HEK293T (cell line): ENCODE measurements at regions of chr12 and their contacts with region 1.

Region 1: GRCh38 chr12:57111031-57111734 is at the start of gene STAT6:
- DNase-seq: peak; percentile 37

Region 2: GRCh38 chr12:57001448-57001906 is 109.7 kb before region 1 on chr12:
- CTCF ChIA-PET with region 1: interaction called, 17 read pairs
- POLR2A ChIA-PET with region 1: interaction called, 4 read pairs
- DNase-seq: peak; percentile 81

Region 3: GRCh38 chr12:57063991-57064685 is 47.0 kb before region 1 on chr12:
- CTCF ChIA-PET with region 1: interaction called, 48 read pairs
- POLR2A ChIA-PET with region 1: interaction called, 46 read pairs
- DNase-seq: no peak

Region 4: DNA sequence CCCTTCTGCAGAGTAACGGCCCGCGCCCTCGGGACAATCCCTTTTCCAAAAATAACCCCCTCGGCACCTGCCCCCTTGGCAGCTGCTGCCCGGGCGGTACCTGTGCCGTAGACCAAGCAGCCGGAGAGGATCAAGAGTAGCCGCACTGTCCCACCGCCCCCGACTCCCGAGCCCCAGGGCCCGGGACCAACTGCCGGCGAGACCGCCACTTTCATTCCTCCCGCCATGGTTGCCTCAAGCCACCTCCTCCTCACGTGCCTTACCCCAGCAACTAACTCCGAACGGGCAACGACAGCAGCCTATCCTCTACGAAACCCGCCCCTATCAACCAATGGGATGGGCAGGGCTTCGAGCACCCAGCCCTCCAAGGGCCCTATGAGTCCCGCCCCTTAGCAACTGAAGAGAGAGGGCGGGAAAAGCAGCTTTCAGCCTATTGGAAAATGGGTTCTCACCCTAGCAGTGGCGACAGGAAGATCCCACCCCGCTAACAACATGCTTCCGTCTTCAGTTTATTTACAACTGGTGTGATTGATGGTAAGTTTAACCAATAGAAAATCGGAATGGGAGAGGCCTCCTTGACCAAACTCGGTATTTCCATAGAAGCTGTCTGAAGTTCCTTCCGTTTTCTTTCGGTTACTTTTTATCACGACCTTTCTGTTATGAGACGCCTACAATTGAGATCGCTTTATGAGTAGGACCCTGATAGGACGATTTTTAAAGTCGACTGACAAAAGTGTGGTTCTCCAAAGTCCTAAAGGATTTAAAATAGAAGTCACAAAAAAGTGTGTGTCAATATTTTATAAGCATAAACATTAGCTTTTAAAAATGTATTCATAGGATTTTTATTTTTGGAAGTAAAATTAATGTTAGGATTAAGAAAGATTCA is 32.4 kb before region 1 on chr12 and contains the start of gene NEMP1:
- CTCF ChIA-PET with region 1: interaction called, 21 read pairs
- POLR2A ChIA-PET with region 1: interaction called, 36 read pairs
- DNase-seq: peak; percentile 96

Region 5: DNA sequence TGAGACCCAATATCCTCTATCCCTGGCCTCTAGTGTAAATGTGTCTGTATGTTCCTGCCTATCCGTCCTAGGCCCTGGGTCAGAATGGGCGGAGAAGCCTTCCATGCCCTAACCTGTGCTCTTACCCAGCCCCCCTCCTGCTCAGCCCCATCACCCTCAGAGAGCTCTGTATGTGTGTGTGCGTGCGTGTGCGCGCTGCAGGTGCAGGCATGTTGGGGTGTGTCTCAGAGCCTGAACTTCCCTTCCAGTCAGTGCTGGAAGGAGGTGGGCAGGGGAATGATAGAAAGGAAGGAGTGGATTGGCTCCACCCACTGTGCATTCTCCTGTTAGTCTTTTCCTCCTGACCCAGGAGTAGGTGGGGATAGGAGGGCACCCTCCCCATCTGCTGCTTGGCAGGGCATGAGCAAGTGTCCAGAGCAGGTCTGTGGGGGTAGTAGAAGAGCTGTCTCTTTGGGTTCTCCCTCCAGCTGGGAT is 15.0 kb before region 1 on chr12:
- CTCF ChIA-PET with region 1: interaction called, 21 read pairs
- POLR2A ChIA-PET with region 1: interaction called, 25 read pairs
- DNase-seq: no peak

Region 6: DNA sequence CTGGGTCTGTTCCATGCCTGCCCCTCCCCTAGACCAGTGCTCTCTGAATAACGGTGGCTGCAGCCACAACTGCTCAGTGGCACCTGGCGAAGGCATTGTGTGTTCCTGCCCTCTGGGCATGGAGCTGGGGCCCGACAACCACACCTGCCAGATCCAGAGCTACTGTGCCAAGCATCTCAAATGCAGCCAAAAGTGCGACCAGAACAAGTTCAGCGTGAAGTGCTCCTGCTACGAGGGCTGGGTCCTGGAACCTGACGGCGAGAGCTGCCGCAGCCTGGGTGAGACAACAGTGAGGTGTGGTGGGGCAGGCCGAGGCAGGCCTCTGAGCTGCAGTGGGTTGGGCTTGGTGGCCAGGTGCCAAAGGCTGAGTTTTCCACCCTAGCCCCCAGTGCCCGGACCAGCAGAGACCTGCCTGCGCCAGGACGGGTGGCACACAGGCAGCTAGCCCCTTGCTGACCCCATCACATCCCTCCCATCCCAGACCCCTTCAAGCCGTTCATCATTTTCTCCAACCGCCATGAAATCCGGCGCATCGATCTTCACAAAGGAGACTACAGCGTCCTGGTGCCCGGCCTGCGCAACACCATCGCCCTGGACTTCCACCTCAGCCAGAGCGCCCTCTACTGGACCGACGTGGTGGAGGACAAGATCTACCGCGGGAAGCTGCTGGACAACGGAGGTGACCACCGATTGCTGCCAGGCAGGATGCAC is 64.4 kb after region 1 on chr12:
- CTCF ChIA-PET with region 1: interaction called, 15 read pairs
- POLR2A ChIA-PET with region 1: interaction called, 3 read pairs
- DNase-seq: peak; percentile 89